Ascending aorta (tissue), 2 donors: ENCODE measurements at regions of chr1 and their contacts with region 1.

Region 1: DNA sequence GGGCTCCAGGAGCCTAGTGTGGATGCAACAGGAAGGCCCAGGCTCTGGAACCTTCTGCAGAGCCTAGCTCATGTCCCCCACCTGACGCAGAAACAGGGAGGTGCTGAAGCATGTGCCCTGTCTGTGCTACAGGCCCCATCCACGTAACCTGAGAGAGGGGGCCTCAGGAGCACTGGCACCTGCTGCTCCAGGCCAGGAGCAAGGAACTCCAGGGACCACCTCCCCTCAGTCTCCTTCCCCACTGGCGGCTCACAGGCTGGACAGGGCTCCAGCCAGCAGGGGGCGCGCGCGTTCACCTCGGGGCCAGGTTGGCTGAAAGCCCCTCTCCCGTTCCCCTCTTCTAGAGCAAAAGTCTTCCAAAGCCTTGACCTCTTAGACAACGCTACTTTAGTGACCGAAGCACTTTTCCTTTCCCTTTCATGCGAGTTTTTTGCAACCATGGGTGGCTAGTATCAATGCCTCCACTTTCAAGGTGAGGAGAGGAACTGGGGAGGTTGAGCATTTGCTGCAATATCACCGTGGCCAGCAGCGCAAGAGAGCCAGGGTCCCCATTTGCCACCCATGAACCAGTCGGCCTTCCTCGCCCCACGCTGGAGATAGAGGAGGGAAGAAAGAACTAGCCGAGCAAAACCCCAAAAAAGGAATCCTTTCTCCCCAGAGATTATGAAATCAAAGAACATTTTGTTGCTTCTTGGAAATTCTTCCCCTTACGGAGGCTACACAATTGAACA is 52.4 kb upstream of the GPR157 start:
- DNase-seq: peak in 1 of 2 donors; percentile 82
- H3K4me3 ChIP-seq: peak overlapping the region; percentile 72 to 89
- H3K27ac ChIP-seq: peak overlapping the region; percentile 75
- H3K4me1 ChIP-seq: peaks cover 7 to 18% of the 10 kb centered on the region in 2 donors
- H3K27me3 ChIP-seq: no peaks in the 10 kb centered on the region
- CTCF ChIP-seq: peak; percentile 92 to 96 (median 96)

Region 2: GRCh38 chr1:9110669-9111356 is 70.5 kb before region 1 on chr1:
- intact Hi-C with region 1: loop called (anchors 1 kb)
- DNase-seq: peak; percentile 47 to 94
- H3K4me3 ChIP-seq: no peak overlapping the region
- H3K27ac ChIP-seq: no peak overlapping the region
- H3K4me1 ChIP-seq: peaks cover 0 to 6% of the 10 kb centered on the region in 2 donors
- H3K27me3 ChIP-seq: no peaks in the 10 kb centered on the region
- CTCF ChIP-seq: peak; percentile 86 to 93 (median 93)

Region 3: DNA sequence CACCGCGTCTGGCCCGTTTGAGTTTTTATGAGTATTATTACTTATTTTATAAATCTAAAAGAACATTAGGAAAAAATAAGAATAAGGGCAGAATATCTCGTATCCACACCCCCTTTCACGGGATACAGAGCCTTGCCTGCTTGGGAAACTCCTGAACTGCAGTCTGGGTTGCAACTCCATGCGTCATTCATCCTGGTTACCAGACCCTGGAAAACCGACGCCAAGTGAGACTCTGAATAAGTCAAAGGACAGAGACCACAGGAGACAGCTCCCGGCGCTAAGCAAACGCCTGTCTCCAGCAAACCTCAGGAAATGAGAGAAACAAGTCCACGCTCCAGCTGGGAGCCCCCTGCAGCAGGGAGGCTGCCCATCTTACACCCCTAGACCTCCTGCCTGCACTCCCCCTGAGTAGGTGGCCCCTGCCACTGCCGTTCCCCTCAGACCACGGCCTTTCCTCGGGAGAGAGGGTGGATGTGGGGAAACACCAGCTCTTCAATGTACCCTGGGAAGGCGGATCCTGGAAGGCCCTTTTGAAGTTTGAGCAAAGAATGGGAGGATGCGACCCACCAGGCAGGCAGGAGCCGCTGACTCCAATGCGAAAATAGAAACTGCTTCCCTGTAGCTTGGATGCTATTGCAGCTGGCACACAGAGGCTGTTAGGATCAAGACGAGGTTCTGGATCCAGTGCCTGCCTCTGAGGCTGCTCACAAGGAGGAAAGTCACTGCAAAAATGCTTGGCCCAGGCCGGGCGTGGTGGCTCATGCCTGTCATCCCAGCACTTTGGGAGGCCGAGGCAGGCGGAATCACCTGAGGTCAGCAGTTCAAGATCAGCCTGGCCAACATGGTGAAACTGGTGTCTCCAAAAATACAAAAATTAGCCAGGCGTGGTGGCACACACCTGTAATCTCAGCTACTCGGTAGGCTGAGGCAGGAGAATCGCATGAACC is 14.8 kb before region 1 on chr1:
- intact Hi-C with region 1: no loop called
- DNase-seq: no peak
- H3K4me3 ChIP-seq: no peak overlapping the region
- H3K27ac ChIP-seq: no peak overlapping the region
- H3K4me1 ChIP-seq: peaks cover 11 to 18% of the 10 kb centered on the region in 2 donors
- H3K27me3 ChIP-seq: no peaks in the 10 kb centered on the region
- CTCF ChIP-seq: no peak

Region 4: DNA sequence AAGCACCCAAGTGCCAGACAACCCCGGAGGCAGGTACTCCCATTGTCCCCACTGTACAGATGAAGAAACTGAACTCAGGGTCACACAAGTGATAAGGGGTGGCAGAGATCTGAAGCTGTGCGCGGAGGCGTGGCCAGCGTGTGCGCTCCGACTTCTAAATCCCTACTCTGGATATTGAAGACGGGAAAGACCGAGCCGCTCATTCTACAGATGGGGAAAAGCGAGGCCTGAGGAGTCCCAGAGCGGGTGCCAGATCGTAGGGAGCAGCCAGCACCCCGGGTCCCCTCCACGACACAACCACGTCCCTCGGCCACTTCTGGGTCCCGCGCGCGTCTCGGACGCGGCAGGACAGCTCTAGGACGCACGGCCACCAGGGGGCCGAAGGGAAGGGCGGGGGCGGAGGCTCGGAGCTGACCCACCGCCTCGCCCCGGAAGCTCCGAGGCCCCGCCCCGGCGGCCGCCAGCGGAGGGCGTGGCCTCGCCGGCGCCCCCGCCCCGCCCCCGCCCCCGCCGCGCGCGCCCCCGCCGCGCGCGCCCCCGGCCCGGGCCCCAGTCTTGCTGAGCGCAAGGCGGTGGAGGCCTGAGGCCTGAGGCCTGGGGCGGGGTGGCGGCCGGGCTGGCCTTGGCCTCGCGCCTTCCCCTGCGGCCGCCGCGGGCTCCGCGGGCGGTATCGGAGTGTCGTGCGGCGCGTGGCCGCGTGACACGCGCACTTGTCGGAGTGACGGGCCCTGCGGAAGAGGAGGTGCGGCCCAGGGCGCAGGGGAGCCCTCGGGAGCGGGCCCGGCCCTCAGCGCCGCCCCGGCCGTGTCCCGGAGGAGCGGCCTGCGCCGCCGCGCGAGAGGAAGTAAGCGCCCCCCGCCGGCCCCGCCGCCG is 53.1 kb after region 1 on chr1 and contains the start of gene H6PD:
- intact Hi-C with region 1: loop called (anchors 5 kb)
- DNase-seq: peak; percentile 45 to 91
- H3K4me3 ChIP-seq: peak within 1 kb of the TSS; percentile 68 to 73
- H3K27ac ChIP-seq: peak within 1 kb of the TSS; percentile 93 to 97
- H3K4me1 ChIP-seq: peaks cover 8 to 46% of the 10 kb centered on the region in 2 donors
- H3K27me3 ChIP-seq: no peaks in the 10 kb centered on the region
- CTCF ChIP-seq: peak; percentile 72 to 96 (median 79)
- total RNA-seq, gene H6PD: 56.8 TPM